Mammary epithelial cell (primary cell): ENCODE measurements at regions of chr10 and their contacts with region 1.

Region 1: DNA sequence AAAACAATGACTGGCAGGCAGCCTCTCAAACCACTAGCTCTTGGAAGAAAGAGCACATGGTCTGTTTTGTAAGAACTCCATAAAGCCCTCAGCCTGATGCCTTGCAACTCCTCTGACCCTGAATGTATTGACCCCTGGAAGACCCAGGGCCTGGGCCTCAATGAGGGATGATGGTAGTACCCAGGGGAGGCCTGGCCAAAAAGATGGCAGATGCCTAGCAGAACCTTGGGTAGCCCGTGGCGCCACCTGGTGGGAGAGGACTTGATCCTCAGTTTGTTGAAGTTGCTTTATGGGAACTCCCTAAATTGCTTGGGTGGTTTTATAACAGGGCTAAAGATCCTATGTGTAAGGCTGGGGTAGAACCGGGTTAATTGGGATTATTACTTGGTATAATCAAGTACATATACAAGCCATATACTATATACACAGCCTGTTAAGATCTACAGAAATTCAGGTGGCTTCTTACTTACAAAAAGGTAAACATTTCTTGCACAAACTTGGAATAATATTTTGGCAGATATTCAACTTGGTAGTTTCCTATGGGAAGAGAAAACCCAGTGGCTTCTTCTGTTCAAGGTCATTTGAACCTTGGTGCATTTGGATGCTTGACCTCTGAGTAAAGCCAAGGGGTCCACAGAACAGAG is 95.8 kb upstream of the CACUL1 start:
- DNase-seq: peak; percentile 60
- H3K4me3 ChIP-seq: no peak overlapping the region
- H3K27ac ChIP-seq: no peak overlapping the region
- H3K4me1 ChIP-seq: peaks cover 25% of the 10 kb centered on the region
- H3K27me3 ChIP-seq: no peaks in the 10 kb centered on the region
- CTCF ChIP-seq: peak; percentile 69 to 90

Region 2: DNA sequence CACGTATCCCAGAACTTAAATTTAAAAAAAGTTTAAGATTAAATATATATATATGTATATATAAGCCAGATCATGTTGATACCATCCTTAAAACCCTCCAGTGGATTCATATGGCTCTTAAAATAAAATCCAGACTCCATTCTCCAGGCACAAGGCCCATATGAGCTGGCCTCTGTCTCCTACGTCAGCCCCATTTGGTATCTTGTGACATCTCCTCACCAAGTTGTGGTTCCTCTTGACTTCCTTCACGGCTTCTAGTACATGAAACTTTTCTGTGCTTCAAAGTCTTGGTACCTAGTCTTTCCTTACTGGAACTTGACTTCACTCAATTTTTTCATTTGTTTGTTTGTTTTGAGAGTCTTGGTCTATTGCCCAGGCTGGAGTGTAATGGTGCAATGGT is 316.4 kb before region 1 on chr10:
- CTCF ChIA-PET with region 1: no interaction called
- dilution Hi-C with region 1: no loop called
- in situ Hi-C with region 1: no loop called
- intact Hi-C with region 1: no loop called
- DNase-seq: no peak
- H3K4me3 ChIP-seq: no peak overlapping the region
- H3K27ac ChIP-seq: no peak overlapping the region
- H3K4me1 ChIP-seq: peaks cover 4% of the 10 kb centered on the region
- H3K27me3 ChIP-seq: no peaks in the 10 kb centered on the region
- CTCF ChIP-seq: no peak

Region 3: GRCh38 chr10:118584181-118584954 is 266.2 kb before region 1 on chr10:
- CTCF ChIA-PET with region 1: no interaction called
- dilution Hi-C with region 1: no loop called
- in situ Hi-C with region 1: no loop called
- intact Hi-C with region 1: loop called (anchors 5 kb)
- DNase-seq: peak; percentile 74
- H3K4me3 ChIP-seq: no peak overlapping the region
- H3K27ac ChIP-seq: no peak overlapping the region
- H3K4me1 ChIP-seq: peaks cover 18% of the 10 kb centered on the region
- H3K27me3 ChIP-seq: peaks cover 3% of the 10 kb centered on the region
- CTCF ChIP-seq: no peak

Region 4: GRCh38 chr10:118754720-118755480 is 95.6 kb before region 1 on chr10 and contains the start of gene CACUL1:
- CTCF ChIA-PET with region 1: no interaction called
- dilution Hi-C with region 1: no loop called
- in situ Hi-C with region 1: no loop called
- intact Hi-C with region 1: loop called (anchors 5 kb)
- DNase-seq: peak; percentile 99
- H3K4me3 ChIP-seq: peak within 1 kb of the TSS; percentile 73 to 90 (median 90)
- H3K27ac ChIP-seq: peak within 1 kb of the TSS; percentile 79
- H3K4me1 ChIP-seq: no peaks in the 10 kb centered on the region
- H3K27me3 ChIP-seq: no peaks in the 10 kb centered on the region
- CTCF ChIP-seq: no peak
- total RNA-seq, gene CACUL1: 49.8 to 59.2 TPM

Region 5: DNA sequence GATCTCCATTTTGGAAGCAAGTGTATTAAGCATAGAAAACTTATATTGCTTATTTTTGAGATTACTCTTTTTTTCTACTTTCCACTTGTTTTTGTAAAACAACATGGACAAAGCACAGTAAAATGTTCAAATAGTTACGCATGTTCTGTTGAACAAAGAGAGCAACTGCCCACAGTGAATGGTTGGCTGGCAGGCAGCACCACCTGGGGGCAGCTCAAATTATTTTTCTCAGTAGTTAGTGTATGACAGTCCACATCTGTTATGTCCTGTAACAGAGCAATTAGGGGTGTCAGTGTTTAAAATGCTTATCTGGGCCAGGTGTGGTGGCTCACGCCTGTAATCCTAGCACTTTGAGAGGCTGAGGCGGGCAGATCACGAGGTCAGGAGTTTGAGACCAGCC is 49.6 kb before region 1 on chr10:
- CTCF ChIA-PET with region 1: no interaction called
- dilution Hi-C with region 1: loop called (anchors 5 kb)
- in situ Hi-C with region 1: no loop called
- intact Hi-C with region 1: loop called (anchors 2 kb)
- DNase-seq: peak; percentile 26
- H3K4me3 ChIP-seq: no peak overlapping the region
- H3K27ac ChIP-seq: no peak overlapping the region
- H3K4me1 ChIP-seq: peaks cover 20% of the 10 kb centered on the region
- H3K27me3 ChIP-seq: no peaks in the 10 kb centered on the region
- CTCF ChIP-seq: peak; percentile 51 to 68

Region 6: GRCh38 chr10:118901380-118901779 is 50.8 kb after region 1 on chr10:
- CTCF ChIA-PET with region 1: no interaction called
- dilution Hi-C with region 1: loop called (anchors 5 kb)
- in situ Hi-C with region 1: no loop called
- intact Hi-C with region 1: no loop called
- DNase-seq: no peak
- H3K4me3 ChIP-seq: no peak overlapping the region
- H3K27ac ChIP-seq: no peak overlapping the region
- H3K4me1 ChIP-seq: no peaks in the 10 kb centered on the region
- H3K27me3 ChIP-seq: no peaks in the 10 kb centered on the region
- CTCF ChIP-seq: no peak

Region 7: GRCh38 chr10:118918587-118918986 is 68.0 kb after region 1 on chr10:
- CTCF ChIA-PET with region 1: interaction called, 15 read pairs
- dilution Hi-C with region 1: no loop called
- in situ Hi-C with region 1: no loop called
- intact Hi-C with region 1: no loop called
- DNase-seq: no peak
- H3K4me3 ChIP-seq: no peak overlapping the region
- H3K27ac ChIP-seq: no peak overlapping the region
- H3K4me1 ChIP-seq: no peaks in the 10 kb centered on the region
- H3K27me3 ChIP-seq: no peaks in the 10 kb centered on the region
- CTCF ChIP-seq: no peak

Region 8: GRCh38 chr10:119028900-119029612 is 178.5 kb after region 1 on chr10:
- CTCF ChIA-PET with region 1: no interaction called
- dilution Hi-C with region 1: no loop called
- in situ Hi-C with region 1: loop called in 1 of 2 experiments (anchors 10 kb)
- intact Hi-C with region 1: loop called (anchors 2 kb)
- DNase-seq: peak; percentile 73
- H3K4me3 ChIP-seq: peak overlapping the region; percentile 24 to 71 (median 32)
- H3K27ac ChIP-seq: no peak overlapping the region
- H3K4me1 ChIP-seq: peaks cover 32% of the 10 kb centered on the region
- H3K27me3 ChIP-seq: no peaks in the 10 kb centered on the region
- CTCF ChIP-seq: peak; percentile 1 to 29